ENCODE measurements at regions of chr6 and their contacts with region 1.

Region 1: GRCh38 chr6:35139908-35140655 is 1.1 kb downstream of the TCP11 start:
- DNase-seq: peak; percentile 73
- H3K4me3 Mint-ChIP-seq: no peak overlapping the region
- H3K27ac Mint-ChIP-seq: no peak overlapping the region
- H3K4me1 Mint-ChIP-seq: peaks cover 40% of the 10 kb centered on the region
- H3K27me3 Mint-ChIP-seq: no peaks in the 10 kb centered on the region
- CTCF ChIP-seq: peak; percentile 88

Region 2: GRCh38 chr6:34161857-34162515 is 978.1 kb before region 1 on chr6:
- CTCF ChIA-PET with region 1: interaction called, 3 read pairs
- intact Hi-C with region 1: loop called (anchors 5 kb)
- DNase-seq: no peak
- H3K4me3 Mint-ChIP-seq: no peak overlapping the region
- H3K27ac Mint-ChIP-seq: no peak overlapping the region
- H3K4me1 Mint-ChIP-seq: no peaks in the 10 kb centered on the region
- H3K27me3 Mint-ChIP-seq: peaks cover 54% of the 10 kb centered on the region
- CTCF ChIP-seq: no peak

Region 3: DNA sequence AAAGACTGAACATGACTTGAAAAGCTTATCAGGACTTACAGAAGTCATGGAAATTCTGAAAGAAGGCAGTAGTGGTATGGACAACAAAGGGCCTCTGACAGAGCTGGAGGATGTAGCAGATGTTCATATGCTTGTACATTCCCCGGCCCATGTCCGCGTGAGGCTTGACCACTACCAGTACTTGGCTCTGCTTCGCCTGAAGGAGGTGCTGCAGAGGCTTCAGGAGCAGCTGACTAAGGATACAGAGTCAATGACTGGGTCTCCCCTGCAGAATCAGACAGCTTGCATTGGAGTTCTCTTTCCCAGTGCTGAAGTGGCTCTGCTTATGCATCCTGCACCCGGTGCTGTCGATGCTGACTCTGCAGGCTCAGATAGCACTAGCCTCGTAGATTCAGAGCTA is 281.4 kb before region 1 on chr6:
- CTCF ChIA-PET with region 1: no interaction called
- intact Hi-C with region 1: loop called (anchors 10 kb)
- DNase-seq: no peak
- H3K4me3 Mint-ChIP-seq: no peak overlapping the region
- H3K27ac Mint-ChIP-seq: no peak overlapping the region
- H3K4me1 Mint-ChIP-seq: no peaks in the 10 kb centered on the region
- H3K27me3 Mint-ChIP-seq: no peaks in the 10 kb centered on the region
- CTCF ChIP-seq: no peak

Region 4: DNA sequence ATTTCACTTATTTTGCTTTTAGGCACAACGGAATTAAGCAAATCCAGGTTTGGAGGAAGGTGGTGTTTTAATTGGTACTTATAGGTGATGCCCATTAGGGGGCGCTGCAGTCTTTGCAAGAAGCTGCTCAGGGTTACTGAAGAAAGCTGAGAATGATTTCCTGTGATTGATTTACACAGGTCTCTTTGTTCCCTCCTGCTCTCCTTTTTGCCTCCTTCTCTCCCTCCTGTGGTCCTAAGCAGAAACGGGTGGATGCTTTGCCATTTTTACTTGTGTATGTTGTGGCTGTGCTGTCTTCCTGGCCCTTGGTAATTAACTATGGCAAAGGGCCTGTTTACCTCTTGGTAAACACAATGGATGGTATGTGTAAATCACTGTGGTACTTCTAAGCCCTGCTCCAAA is 153.2 kb before region 1 on chr6:
- CTCF ChIA-PET with region 1: interaction called, 32 read pairs
- intact Hi-C with region 1: loop called (anchors 1 kb)
- DNase-seq: peak; percentile 81
- H3K4me3 Mint-ChIP-seq: no peak overlapping the region
- H3K27ac Mint-ChIP-seq: no peak overlapping the region
- H3K4me1 Mint-ChIP-seq: no peaks in the 10 kb centered on the region
- H3K27me3 Mint-ChIP-seq: no peaks in the 10 kb centered on the region
- CTCF ChIP-seq: peak; percentile 90

Region 5: GRCh38 chr6:35128496-35128895 is 11.6 kb before region 1 on chr6:
- CTCF ChIA-PET with region 1: interaction called, 18 read pairs
- intact Hi-C with region 1: no loop called
- DNase-seq: no peak
- H3K4me3 Mint-ChIP-seq: no peak overlapping the region
- H3K27ac Mint-ChIP-seq: no peak overlapping the region
- H3K4me1 Mint-ChIP-seq: peaks cover 5% of the 10 kb centered on the region
- H3K27me3 Mint-ChIP-seq: peaks cover 29% of the 10 kb centered on the region
- CTCF ChIP-seq: no peak

Measured in Calu3 (cell line).